GM13976 (cell line): ENCODE measurements at regions of chr6 and their contacts with region 1.

Region 1: GRCh38 chr6:36759148-36759759 is 61.6 kb downstream of the RAB44 start:
- DNase-seq: peak; percentile 90
- CTCF ChIP-seq: peak; percentile 96

Region 2: DNA sequence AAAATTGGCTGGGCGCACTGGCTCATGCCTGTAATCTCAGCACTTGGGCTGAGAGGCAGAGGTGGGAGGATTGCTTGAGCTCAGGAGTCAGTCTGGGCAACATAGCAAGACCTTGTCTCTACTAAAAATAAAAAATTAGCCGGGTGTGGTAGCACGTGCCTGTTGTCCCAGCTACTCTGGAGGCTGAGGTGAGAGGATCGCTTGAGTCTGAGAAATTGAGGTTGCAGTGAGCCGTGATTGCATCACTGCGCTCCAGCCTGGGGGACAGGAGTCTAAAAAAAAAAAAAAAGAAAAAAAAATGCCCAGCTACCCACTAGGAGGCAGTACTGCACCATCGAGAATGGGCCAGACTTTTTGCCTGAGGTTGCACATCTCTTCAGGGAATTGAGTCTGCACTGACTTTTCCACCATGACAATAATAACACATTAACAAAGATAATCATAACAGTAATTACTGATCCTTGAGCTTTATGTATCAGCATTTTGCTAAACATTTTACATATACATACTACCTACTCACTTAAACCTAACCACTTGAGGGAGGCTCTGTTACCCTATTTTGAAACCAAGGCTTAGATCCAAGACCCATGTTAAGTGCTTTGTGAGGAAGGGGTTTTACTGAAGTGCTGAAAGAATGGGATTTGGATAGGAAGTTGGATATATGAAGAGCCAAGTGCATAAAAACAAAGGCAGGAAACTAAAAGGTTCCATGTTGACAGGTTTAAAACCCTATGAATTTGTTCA is 144.1 kb before region 1 on chr6:
- in situ Hi-C with region 1: loop called (anchors 10 kb)
- DNase-seq: peak; percentile 70
- CTCF ChIP-seq: peak; percentile 46